WTC11 (cell line): ENCODE measurements at regions of chr3 and their contacts with region 1.

Region 1: DNA sequence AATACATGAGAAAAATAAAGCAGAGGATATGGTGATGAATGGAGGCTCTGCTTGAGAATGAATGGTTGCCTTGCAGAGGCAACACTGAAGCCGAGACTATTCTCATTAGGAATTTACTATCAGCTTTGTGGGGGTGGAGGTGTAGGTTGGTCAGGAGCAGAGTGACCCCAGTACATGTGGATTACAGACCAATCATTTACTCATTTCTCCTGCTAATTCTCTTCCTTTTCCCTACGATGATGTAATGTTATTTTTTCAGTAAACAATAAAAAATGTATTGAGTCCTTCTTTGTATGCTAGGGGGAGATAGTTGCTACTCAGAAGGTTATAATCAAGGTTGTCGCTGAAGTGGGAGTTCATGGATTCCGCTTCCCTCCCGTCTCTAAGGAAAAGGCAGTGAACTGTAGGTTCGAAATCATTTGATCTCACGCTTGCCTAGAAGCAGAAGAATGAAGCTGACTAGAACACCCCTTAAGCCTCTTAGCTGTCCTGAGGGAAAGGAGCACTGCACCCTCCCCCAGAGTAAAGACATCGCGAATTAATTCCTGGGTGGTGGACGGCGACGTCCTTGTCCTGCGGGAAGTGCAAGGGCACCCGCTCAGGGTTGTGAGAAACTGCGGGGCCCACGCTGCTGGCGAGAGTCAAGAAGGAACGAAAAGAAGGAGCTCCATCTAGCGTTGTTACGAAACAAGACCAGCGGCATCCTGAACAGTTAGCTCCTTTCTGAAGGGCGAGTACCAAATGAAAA is 213.2 kb upstream of the PFN2 start:
- DNase-seq: peak; percentile 72
- ATAC-seq: peak; percentile 96
- H3K4me3 Mint-ChIP-seq: no peak overlapping the region
- H3K27ac Mint-ChIP-seq: no peak overlapping the region
- H3K4me1 Mint-ChIP-seq: peaks cover 7% of the 10 kb centered on the region
- H3K27me3 Mint-ChIP-seq: no peaks in the 10 kb centered on the region
- CTCF ChIP-seq: no peak

Region 2: GRCh38 chr3:149816986-149817385 is 366.9 kb before region 1 on chr3:
- CTCF ChIA-PET with region 1: no interaction called
- POLR2A ChIA-PET with region 1: no interaction called
- DNase-seq: no peak
- ATAC-seq: no peak
- H3K4me3 Mint-ChIP-seq: no peak overlapping the region
- H3K27ac Mint-ChIP-seq: no peak overlapping the region
- H3K4me1 Mint-ChIP-seq: peaks cover 59% of the 10 kb centered on the region
- H3K27me3 Mint-ChIP-seq: no peaks in the 10 kb centered on the region
- CTCF ChIP-seq: no peak

Region 3: GRCh38 chr3:149936812-149937233 is 247.0 kb before region 1 on chr3:
- CTCF ChIA-PET with region 1: interaction called, 22 read pairs
- POLR2A ChIA-PET with region 1: no interaction called
- DNase-seq: peak; percentile 69
- ATAC-seq: peak; percentile 98
- H3K4me3 Mint-ChIP-seq: no peak overlapping the region
- H3K27ac Mint-ChIP-seq: peak overlapping the region; percentile 45; the same call in 1 of the 2 replicates
- H3K4me1 Mint-ChIP-seq: no peaks in the 10 kb centered on the region
- H3K27me3 Mint-ChIP-seq: no peaks in the 10 kb centered on the region
- CTCF ChIP-seq: 0 out of 2 replicates have a peak, but pooled peaks have one; percentile 33

Region 4: DNA sequence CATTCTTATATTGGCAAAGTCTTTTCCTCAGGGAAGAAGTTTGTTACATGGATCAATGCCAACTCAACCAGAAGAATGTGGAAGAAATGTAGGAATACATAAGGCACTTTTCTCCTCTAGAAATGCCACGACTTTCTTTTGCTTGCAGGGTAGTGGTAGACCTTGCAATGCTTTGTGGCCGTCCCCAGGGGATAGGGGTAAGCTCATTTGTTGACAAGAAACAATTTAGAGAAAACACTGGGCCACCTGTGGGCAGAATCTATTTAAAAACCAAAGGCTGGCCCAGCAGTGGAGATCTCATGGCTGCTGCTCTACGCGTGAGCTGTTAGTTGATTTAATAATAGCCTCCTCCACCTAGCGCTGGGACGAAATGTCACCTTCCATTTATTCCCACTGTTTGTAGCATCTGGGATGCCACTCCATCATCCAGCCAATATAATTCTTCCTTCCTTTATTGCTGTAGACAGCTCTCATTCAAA is 148.5 kb before region 1 on chr3:
- CTCF ChIA-PET with region 1: interaction called, 12 read pairs
- POLR2A ChIA-PET with region 1: no interaction called
- DNase-seq: no peak
- ATAC-seq: peak; percentile 79
- H3K4me3 Mint-ChIP-seq: no peak overlapping the region; the same call in 1 of the 2 replicates
- H3K27ac Mint-ChIP-seq: no peak overlapping the region
- H3K4me1 Mint-ChIP-seq: peaks cover 65% of the 10 kb centered on the region
- H3K27me3 Mint-ChIP-seq: peaks cover 34% of the 10 kb centered on the region
- CTCF ChIP-seq: no peak

Region 5: GRCh38 chr3:150145659-150146058 is 38.2 kb before region 1 on chr3:
- CTCF ChIA-PET with region 1: no interaction called
- POLR2A ChIA-PET with region 1: no interaction called
- DNase-seq: no peak
- ATAC-seq: no peak
- H3K4me3 Mint-ChIP-seq: no peak overlapping the region
- H3K27ac Mint-ChIP-seq: no peak overlapping the region
- H3K4me1 Mint-ChIP-seq: peaks cover 15% of the 10 kb centered on the region
- H3K27me3 Mint-ChIP-seq: no peaks in the 10 kb centered on the region; the same call in 1 of the 2 replicates
- CTCF ChIP-seq: no peak

Region 6: GRCh38 chr3:150202711-150203110 is 18.9 kb after region 1 on chr3:
- CTCF ChIA-PET with region 1: interaction called, 11 read pairs
- POLR2A ChIA-PET with region 1: no interaction called
- DNase-seq: no peak
- ATAC-seq: 0 out of 2 replicates have a peak, but pooled peaks have one; percentile 22
- H3K4me3 Mint-ChIP-seq: no peak overlapping the region
- H3K27ac Mint-ChIP-seq: 0 out of 2 replicates have a peak overlapping the region, but pooled peaks have one; percentile 11
- H3K4me1 Mint-ChIP-seq: peaks cover 35% of the 10 kb centered on the region
- H3K27me3 Mint-ChIP-seq: no peaks in the 10 kb centered on the region
- CTCF ChIP-seq: no peak

Region 7: DNA sequence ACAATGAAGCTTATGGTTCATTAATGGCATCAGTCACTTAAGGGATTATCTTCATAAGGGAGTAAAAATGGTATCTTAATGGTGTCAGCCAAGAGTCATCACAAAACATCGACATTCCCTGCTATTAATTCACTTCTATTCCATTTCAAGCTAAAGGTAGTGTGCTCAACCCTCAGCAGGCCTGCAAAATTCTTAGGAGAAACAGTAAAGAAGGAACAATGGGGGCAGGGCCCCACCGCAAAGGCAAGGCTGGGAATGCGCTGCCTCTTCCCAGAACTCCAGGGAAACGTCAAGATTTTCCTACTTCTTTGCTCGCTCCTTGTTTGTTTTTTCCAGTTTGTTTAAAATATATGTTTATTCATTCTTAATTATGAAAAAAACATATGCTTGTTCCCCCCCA is 36.9 kb after region 1 on chr3:
- CTCF ChIA-PET with region 1: interaction called, 11 read pairs
- POLR2A ChIA-PET with region 1: no interaction called
- DNase-seq: no peak
- ATAC-seq: no peak
- H3K4me3 Mint-ChIP-seq: peak overlapping the region; percentile 77
- H3K27ac Mint-ChIP-seq: no peak overlapping the region
- H3K4me1 Mint-ChIP-seq: peaks cover 35% of the 10 kb centered on the region
- H3K27me3 Mint-ChIP-seq: peaks cover 12% of the 10 kb centered on the region
- CTCF ChIP-seq: no peak

Region 8: DNA sequence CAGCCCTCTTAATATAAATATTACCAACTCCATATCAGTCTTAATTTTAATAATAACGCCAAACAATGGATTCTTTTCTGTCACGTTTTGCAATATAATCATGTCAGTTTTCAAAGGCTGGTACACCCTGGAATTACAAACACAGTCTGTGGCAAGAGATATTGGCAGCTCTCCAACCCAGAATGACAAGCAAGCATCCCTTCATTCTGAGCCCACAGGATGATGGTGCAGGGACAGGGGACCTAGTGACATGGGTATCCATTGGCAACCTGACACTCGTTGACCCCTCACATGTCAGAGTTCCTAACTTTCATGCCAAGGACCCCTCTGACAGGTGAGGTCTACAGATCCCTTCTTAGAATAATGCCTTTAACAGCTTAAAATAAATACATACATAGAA is 69.8 kb after region 1 on chr3:
- CTCF ChIA-PET with region 1: no interaction called
- POLR2A ChIA-PET with region 1: no interaction called
- DNase-seq: no peak
- ATAC-seq: no peak
- H3K4me3 Mint-ChIP-seq: no peak overlapping the region
- H3K27ac Mint-ChIP-seq: no peak overlapping the region
- H3K4me1 Mint-ChIP-seq: peaks cover 25% of the 10 kb centered on the region
- H3K27me3 Mint-ChIP-seq: no peaks in the 10 kb centered on the region
- CTCF ChIP-seq: no peak

Region 9: DNA sequence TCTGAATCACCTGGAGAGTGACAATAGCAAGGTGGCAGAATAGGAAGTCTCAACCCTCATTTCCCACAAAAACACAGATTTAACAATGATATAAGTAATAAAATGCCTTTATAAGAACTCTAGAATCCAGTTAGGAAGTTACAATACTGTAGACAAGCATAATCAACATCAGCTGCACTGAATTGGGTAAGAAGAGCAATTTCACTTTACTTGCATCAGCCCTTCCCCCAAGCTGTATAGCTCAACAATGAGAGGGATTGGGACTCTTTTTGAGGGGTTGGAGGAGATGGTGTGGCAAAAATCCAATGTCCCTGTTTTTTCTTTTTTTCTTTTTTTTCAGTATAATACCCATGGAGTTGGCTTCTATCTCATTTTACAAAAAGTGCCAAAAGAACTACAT is 299.4 kb after region 1 on chr3:
- CTCF ChIA-PET with region 1: no interaction called
- POLR2A ChIA-PET with region 1: no interaction called
- DNase-seq: no peak
- ATAC-seq: no peak
- H3K4me3 Mint-ChIP-seq: no peak overlapping the region
- H3K27ac Mint-ChIP-seq: no peak overlapping the region
- H3K4me1 Mint-ChIP-seq: no peaks in the 10 kb centered on the region; the same call in 1 of the 2 replicates
- H3K27me3 Mint-ChIP-seq: no peaks in the 10 kb centered on the region
- CTCF ChIP-seq: no peak